Activated CD4-positive, alpha-beta memory T cell treated with anti-CD3 and anti-CD28 coated beads for 36 hours (primary cell): ENCODE measurements at regions of chr10 and their contacts with region 1.

Region 1: GRCh38 chr10:110871298-110872084 is at the start of gene PDCD4:
- DNase-seq: peak; percentile 97
- H3K4me3 Mint-ChIP-seq: peak within 1 kb of the TSS; percentile 86
- H3K27ac Mint-ChIP-seq: peak within 1 kb of the TSS; percentile 93
- H3K4me1 Mint-ChIP-seq: peaks cover 61% of the 10 kb centered on the region
- H3K27me3 Mint-ChIP-seq: no peaks in the 10 kb centered on the region
- total RNA-seq, gene PDCD4: 123 to 141 TPM

Region 2: DNA sequence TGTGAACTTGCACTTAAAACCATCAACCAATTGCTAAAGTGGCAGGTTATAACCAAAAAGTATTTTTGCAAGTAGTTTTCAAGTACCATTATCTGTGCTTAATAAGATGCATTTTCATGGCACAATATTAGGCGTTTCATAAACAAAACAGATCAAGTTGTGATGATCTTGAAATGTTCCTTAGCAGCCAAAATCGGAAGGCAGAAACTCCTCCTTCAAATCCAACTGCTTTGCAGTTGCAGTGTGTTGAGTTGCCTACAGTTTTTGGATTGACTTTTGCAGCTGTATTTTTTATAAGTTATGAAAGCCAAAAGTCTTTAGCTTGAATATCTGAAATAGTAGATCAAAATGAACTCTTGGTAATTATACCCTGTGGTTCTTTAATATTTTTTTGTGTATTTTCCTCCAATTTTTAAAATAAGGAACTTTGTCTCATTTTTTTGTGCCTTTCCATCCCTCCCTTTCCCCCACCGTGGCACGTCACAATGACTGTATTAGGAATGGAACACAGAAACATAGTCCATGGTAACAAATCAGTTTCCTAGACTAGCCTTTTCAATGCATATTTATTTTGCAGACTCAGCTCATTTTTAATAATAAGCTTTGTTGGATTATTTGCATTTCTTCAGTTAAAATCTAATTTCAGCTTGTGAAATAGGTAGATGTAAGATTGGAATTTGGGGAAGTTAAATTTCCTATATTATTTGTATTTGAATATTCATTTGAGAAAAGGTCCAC is 783.0 kb before region 1 on chr10:
- CTCF ChIA-PET with region 1: no interaction called
- POLR2A ChIA-PET with region 1: no interaction called
- intact Hi-C with region 1: loop called (anchors 5 kb)
- DNase-seq: no peak
- H3K4me3 Mint-ChIP-seq: no peak overlapping the region
- H3K27ac Mint-ChIP-seq: peak overlapping the region; percentile 96
- H3K4me1 Mint-ChIP-seq: peaks cover 76% of the 10 kb centered on the region
- H3K27me3 Mint-ChIP-seq: no peaks in the 10 kb centered on the region

Region 3: GRCh38 chr10:110574420-110574819 is 297.1 kb before region 1 on chr10:
- CTCF ChIA-PET with region 1: no interaction called
- POLR2A ChIA-PET with region 1: no interaction called
- intact Hi-C with region 1: loop called (anchors 5 kb)
- DNase-seq: no peak
- H3K4me3 Mint-ChIP-seq: no peak overlapping the region
- H3K27ac Mint-ChIP-seq: no peak overlapping the region
- H3K4me1 Mint-ChIP-seq: peaks cover 62% of the 10 kb centered on the region
- H3K27me3 Mint-ChIP-seq: no peaks in the 10 kb centered on the region

Region 4: GRCh38 chr10:110774069-110775019 is 97.1 kb before region 1 on chr10:
- CTCF ChIA-PET with region 1: interaction called, 6 read pairs
- POLR2A ChIA-PET with region 1: interaction called, 7 read pairs
- intact Hi-C with region 1: loop called (anchors 1 kb)
- DNase-seq: peak; percentile 69
- H3K4me3 Mint-ChIP-seq: peak overlapping the region; percentile 42
- H3K27ac Mint-ChIP-seq: peak overlapping the region; percentile 79
- H3K4me1 Mint-ChIP-seq: peaks cover 40% of the 10 kb centered on the region
- H3K27me3 Mint-ChIP-seq: no peaks in the 10 kb centered on the region

Region 5: DNA sequence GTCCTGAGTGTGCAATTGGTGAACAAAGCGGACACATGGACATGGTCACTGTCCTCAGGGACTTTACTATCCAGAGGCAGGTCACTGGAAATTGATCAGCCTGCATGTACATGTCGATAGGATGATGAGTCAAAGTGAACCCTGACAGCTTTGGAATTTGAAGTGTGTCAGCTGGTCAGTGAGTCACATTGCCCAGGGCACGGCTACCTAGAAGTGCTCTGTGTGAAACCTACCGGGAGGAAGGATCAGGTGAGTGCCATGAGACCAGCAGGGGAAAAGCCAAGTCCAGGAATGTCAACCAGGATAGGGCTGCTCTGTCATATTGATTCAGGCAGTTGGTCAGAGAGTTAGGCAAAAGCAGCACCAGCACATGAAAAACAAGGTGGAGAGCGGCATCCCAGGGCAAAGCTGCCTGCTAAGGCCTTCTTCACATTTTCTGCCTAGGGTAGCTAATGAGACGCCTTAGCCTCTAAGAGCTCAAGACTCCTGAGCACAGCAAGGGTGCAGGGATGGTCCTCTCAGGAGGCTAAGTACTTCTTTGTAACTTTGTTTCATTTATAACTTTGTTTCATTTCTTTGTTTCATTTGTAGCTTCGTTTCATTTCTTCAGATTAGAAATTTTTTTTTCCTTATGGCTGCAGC is 19.1 kb before region 1 on chr10:
- CTCF ChIA-PET with region 1: interaction called, 6 read pairs
- POLR2A ChIA-PET with region 1: interaction called, 29 read pairs
- intact Hi-C with region 1: loop called (anchors 2 kb)
- DNase-seq: peak; percentile 75
- H3K4me3 Mint-ChIP-seq: peak overlapping the region; percentile 57
- H3K27ac Mint-ChIP-seq: peak overlapping the region; percentile 66
- H3K4me1 Mint-ChIP-seq: peaks cover 62% of the 10 kb centered on the region
- H3K27me3 Mint-ChIP-seq: no peaks in the 10 kb centered on the region

Region 6: DNA sequence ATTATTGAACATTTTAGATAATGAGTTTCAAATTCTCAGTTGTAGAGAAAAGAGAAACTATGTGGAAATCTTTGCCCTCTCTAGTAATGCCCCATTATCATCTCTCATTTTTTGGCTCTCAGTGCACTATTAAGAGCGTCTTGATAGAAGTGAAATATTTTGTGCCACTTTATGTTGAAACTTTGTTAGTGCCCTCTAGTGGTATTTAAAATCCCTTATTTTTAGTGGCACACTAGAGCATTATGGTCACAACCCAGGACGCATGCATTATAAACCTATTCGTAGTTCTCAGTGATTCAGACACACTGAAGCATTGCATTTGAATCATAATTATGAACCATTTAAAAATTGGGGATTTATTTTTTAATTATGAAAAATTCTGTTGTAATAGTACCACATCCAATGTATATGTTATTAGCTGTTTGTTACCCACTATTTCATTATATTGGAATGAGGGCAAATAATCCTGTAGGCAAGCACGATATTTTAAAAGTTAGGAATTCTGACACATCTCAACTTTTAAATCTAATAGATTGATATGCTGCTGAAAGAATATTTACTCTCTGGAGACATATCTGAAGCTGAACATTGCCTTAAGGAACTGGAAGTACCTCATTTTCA is 22.2 kb after region 1 on chr10:
- CTCF ChIA-PET with region 1: interaction called, 4 read pairs
- POLR2A ChIA-PET with region 1: no interaction called
- intact Hi-C with region 1: loop called (anchors 2 kb)
- DNase-seq: no peak
- H3K4me3 Mint-ChIP-seq: no peak overlapping the region
- H3K27ac Mint-ChIP-seq: peak overlapping the region; percentile 4
- H3K4me1 Mint-ChIP-seq: peaks cover 47% of the 10 kb centered on the region
- H3K27me3 Mint-ChIP-seq: no peaks in the 10 kb centered on the region

Region 7: DNA sequence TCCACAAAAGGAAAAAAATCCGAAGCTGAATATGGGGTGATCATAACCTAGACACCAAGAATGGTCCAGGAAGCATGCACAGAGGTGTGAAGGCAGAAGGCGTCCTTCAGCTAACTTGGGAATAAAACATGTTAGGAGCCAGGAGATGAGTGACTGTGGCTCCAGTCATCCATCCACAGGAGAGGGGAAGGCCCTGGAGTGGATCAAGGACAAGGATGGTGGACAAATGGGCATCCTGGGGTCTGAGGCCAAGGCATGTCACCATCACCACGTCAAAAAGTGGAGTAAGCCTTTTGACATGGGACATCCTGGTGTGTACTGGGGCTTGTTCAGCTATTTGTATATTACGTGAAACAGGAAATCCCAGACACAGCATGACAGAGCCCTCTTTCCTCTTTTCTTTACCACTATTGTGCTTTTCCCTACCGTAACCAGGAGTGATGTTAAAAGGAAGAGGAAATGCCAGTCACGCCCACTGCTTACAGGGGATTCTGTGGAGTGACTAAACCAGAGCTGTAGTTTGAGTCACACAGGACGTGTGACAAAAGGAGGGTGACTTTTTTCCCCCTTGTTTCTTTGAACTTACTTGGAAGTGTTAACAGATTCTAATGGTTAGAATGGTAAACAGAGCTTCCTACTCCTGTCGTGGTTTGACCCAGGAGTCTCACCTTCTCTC is 1517.8 kb after region 1 on chr10:
- CTCF ChIA-PET with region 1: no interaction called
- POLR2A ChIA-PET with region 1: no interaction called
- intact Hi-C with region 1: loop called (anchors 2 kb)
- DNase-seq: peak; percentile 80
- H3K4me3 Mint-ChIP-seq: peak overlapping the region; percentile 1
- H3K27ac Mint-ChIP-seq: peak overlapping the region; percentile 88
- H3K4me1 Mint-ChIP-seq: peaks cover 58% of the 10 kb centered on the region
- H3K27me3 Mint-ChIP-seq: no peaks in the 10 kb centered on the region